ENCODE measurements at regions of chr17 and their contacts with region 1.

Region 1: GRCh38 chr17:11628374-11628773 is 30.1 kb downstream of the DNAH9 start:
- DNase-seq: no peak
- ATAC-seq: no peak
- H3K4me3 ChIP-seq: no peak overlapping the region
- H3K27ac ChIP-seq: no peak overlapping the region
- H3K4me1 ChIP-seq: no peaks in the 10 kb centered on the region
- H3K27me3 ChIP-seq: no peaks in the 10 kb centered on the region
- CTCF ChIP-seq: no peak
- POLR2A ChIP-seq: no peak

Region 2: GRCh38 chr17:11495613-11496012 is 132.8 kb before region 1 on chr17:
- intact Hi-C with region 1: loop called (anchors 10 kb)
- DNase-seq: no peak
- ATAC-seq: no peak
- H3K4me3 ChIP-seq: no peak overlapping the region
- H3K27ac ChIP-seq: no peak overlapping the region
- H3K4me1 ChIP-seq: no peaks in the 10 kb centered on the region
- H3K27me3 ChIP-seq: no peaks in the 10 kb centered on the region
- CTCF ChIP-seq: no peak
- POLR2A ChIP-seq: no peak

Measured in body of pancreas (tissue), 4 donors.